ENCODE measurements at regions of chr7 and their contacts with region 1.

Region 1: GRCh38 chr7:45157653-45158401 is at the start of gene RAMP3:
- DNase-seq: peak; percentile 78
- total RNA-seq, gene RAMP3: 45.5 to 54.1 TPM

Region 2: DNA sequence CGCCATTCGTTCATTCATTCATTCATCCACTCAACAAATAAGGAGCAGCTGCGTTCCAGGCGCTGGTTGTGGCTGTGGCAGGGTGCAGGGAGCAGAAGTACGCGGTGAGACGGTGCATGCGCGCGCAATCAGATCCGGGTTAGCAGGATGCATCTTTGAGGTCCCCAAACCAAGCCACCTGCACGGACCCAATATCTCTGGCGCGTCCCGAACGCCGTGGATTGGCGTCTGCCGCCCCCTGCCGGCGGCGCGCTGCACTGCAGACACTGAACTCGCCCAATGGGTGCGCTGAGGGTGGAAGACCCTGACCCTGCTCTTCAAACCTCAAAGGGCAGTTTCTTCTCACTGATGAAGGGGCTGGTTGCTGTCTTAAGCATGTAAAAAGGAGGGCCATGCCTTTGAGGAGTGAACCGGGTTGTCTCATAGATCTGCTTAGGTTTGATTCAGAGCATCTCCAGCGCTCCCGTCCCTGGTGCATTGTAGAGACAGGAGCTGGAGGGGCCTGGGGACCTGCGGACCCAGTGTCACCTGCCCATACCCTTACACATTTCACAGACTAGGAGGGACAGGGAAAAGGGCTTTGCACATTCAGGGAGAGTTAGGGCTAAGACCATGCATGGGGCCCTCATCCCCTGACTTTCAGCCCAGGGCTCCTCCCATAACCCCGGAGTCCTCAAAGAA is 102.3 kb after region 1 on chr7:
- intact Hi-C with region 1: loop called (anchors 5 kb)
- DNase-seq: peak; percentile 90

Region 3: GRCh38 chr7:45679516-45679915 is 521.7 kb after region 1 on chr7:
- intact Hi-C with region 1: loop called in 1 of 2 experiments (anchors 10 kb)
- DNase-seq: peak; percentile 30

Region 4: DNA sequence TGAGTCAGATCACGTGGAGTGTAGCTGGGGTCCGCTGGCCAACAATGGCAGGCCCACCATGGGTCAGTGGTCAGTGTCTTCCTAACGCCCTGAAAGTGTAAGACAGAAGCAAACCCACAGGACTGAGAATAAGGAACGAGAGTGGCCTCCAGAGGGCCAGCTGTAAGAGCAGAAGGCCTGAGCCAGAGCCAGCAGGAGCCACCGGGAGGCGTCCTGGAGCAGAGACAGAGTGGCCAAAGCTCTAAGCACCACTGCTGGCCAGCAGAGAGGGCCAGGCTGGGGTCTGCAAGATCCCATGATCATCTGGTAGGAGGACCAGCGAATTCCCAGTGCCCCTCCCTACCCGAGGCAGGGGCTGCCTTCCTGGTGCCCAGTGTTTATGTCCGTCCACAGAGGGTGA is 705.9 kb after region 1 on chr7:
- intact Hi-C with region 1: loop called (anchors 10 kb)
- DNase-seq: no peak